HAP-1 (cell line): ENCODE measurements at regions of chr7 and their contacts with region 1.

Region 1: DNA sequence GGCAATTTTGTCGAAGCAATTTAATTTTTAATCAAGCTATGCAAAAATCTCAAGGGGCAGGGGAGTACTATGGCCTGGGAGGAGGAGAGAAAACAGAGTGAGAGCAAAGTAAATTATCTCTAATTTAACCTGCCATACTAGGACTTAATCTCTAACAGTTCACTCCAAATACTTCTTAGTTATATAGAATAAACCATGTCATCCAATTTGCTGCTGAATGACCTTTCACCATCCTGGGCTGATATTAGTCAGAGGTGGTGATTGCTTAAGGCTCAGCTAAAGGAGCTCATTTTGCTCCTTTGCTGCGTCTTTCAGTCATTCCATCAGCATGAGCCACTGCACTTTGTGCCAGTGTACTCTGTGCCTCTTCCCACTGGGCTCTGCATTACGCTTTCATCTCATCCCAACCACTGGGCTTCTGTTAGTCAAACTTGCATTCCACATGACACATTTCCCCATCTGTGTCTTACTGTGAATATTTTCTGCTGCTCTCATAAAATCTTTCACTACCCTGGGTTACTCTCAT is 84.2 kb downstream of the CD36 start:
- DNase-seq: no peak
- H3K4me3 ChIP-seq: no peak overlapping the region
- H3K4me1 ChIP-seq: peaks cover 6% of the 10 kb centered on the region; the same call in 1 of the 2 replicates
- H3K27me3 ChIP-seq: no peaks in the 10 kb centered on the region

Region 2: DNA sequence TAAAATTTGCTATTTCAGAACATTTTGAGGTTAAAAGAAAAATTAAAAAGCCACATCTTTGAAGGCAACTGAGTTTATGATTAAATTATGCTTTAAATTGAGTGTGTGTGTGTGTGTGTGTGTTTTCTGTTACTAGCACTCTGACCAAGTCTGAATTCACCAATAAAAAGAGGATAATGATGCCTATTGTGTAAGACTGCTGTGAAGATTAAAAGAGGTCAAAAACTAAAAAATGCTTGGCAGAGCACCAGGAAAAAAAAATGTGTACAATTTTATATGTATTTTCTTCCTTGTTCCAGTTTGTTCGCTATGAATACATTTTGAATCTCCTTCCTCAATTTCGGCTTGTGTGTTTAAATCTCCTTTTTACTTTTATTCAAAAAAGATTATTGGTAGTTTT is 952.6 kb before region 1 on chr7:
- in situ Hi-C with region 1: no loop called
- DNase-seq: peak in 1 of 2 experiments; percentile 44
- H3K4me3 ChIP-seq: no peak overlapping the region
- H3K4me1 ChIP-seq: no peaks in the 10 kb centered on the region; the same call in 1 of the 2 replicates
- H3K27me3 ChIP-seq: no peaks in the 10 kb centered on the region

Region 3: GRCh38 chr7:80630605-80631405 is 91.9 kb before region 1 on chr7:
- in situ Hi-C with region 1: no loop called
- DNase-seq: peak; percentile 48 to 79
- H3K4me3 ChIP-seq: peak overlapping the region; percentile 1
- H3K4me1 ChIP-seq: peaks cover 37% of the 10 kb centered on the region
- H3K27me3 ChIP-seq: no peaks in the 10 kb centered on the region

Region 4: GRCh38 chr7:81140775-81141174 is 418.1 kb after region 1 on chr7:
- in situ Hi-C with region 1: no loop called
- DNase-seq: no peak
- H3K4me3 ChIP-seq: no peak overlapping the region
- H3K4me1 ChIP-seq: no peaks in the 10 kb centered on the region
- H3K27me3 ChIP-seq: no peaks in the 10 kb centered on the region

Region 5: DNA sequence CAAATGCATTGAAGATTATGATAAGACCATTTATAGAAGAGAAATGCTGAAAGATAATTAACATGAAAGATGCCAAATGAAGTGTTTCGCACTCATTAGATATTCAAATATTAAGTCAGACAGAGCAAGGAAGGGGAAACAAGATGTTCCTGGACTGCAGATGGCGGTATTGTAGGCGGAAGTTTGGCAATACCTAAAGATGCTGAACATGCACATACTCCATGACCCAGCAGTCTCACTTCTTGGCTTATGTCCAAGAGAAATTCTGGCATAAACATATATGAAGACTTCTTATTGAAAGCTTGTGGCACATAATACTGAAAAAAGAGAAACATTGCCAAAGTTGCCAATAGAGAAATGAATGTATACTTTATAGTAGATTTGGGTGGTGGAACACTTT is 521.5 kb after region 1 on chr7:
- in situ Hi-C with region 1: loop called (anchors 25 kb)
- DNase-seq: no peak
- H3K4me3 ChIP-seq: no peak overlapping the region
- H3K4me1 ChIP-seq: no peaks in the 10 kb centered on the region
- H3K27me3 ChIP-seq: no peaks in the 10 kb centered on the region